AG04449 (cell line): ENCODE measurements at regions of chr17 and their contacts with region 1.

Region 1: DNA sequence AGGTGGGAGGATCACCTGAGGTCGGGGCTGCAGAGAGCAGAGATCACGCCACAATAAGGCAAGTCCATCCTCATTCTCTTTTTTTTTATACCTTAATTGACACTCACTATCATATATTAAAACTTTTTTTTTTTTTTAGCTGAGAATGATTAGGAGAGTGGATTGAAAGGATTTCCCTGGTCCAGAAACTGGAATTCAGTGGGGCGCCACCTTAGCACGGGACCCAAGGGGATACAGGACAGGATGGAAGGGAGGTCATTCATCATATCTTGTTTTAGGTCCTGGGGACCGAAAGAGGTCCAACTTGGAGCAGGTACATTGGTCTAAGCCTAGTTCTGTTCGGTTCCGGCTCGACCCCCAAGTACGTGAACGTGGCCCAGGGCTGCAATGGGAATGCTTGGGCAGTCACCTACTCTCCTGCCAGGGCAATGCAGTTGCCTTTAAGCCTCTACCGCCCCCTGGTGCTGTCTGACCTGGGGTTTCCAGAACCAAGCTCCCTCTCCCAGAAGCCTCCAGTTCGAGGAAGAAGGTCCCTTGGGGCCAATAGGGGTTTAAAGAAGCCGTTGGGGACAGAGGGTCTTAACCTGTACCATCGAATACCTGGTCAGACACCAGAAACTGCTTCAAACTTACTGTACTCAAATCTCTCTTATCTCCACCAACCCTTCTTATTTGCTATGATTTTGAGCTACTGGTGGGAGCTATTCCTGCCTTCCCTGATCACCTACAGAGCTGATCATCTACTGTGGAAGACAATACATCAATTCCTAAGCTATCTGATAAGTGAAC is 19.9 kb upstream of the GPATCH8 start:
- DNase-seq: no peak
- H3K4me3 ChIP-seq: no peak overlapping the region
- CTCF ChIP-seq: peak; percentile 75

Region 2: GRCh38 chr17:44324571-44325275 is 198.4 kb before region 1 on chr17 and contains the start of gene SLC25A39:
- CTCF ChIA-PET with region 1: interaction called, 13 read pairs
- POLR2A ChIA-PET with region 1: no interaction called
- DNase-seq: no peak
- H3K4me3 ChIP-seq: peak within 1 kb of the TSS; percentile 85
- CTCF ChIP-seq: no peak

Region 3: GRCh38 chr17:44350733-44351226 is 172.3 kb before region 1 on chr17:
- CTCF ChIA-PET with region 1: interaction called, 21 read pairs
- POLR2A ChIA-PET with region 1: no interaction called
- DNase-seq: no peak
- H3K4me3 ChIP-seq: no peak overlapping the region
- CTCF ChIP-seq: peak; percentile 87

Region 4: DNA sequence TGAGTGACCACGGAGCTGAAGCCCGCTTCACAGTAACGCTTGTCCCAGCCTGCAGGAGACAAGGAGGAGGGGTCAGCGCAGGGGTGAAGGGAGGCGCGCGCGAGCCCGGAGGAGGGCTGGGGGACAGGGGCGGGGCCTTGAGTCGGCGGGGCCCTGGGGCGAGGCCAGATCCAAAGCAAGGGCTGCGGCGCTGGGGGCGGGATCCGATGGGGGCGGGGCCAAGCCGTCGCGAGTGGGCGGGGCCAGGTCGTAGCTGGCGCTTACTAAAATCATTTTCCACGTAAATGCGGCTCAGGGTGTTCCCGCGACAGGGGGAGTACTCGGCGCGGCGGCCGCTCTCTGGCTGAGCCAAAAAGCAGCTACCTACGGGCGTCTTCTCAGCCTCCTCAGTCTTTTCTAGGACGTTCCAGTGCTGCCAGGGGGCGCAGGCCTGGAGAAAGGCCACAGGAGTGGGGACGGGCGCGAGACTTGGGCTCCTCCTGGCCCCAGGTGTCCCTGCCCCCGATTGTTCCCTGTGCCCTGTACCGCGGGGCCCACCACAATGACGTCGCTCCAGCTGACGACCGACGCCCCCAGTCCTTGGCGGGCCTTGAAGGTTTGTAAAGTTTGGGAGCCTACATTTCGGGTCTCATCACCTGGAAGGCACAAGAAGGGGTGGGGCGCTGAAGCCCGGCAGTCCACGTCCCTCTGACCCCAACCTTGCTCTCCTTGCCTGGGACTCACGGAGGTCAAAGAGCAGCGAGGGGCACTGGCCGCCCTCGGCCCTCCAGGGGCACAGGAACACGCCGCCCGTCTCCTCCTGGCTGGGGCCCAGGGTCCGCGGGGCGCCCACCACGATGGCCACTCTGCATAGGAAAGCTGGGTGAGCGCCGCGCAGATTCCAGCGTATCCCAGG is 137.5 kb before region 1 on chr17:
- CTCF ChIA-PET with region 1: interaction called, 10 read pairs
- POLR2A ChIA-PET with region 1: no interaction called
- DNase-seq: no peak
- H3K4me3 ChIP-seq: peak overlapping the region; percentile 62
- CTCF ChIP-seq: no peak

Region 5: GRCh38 chr17:44496815-44497214 is 26.3 kb before region 1 on chr17:
- CTCF ChIA-PET with region 1: interaction called, 12 read pairs
- POLR2A ChIA-PET with region 1: no interaction called
- DNase-seq: no peak
- H3K4me3 ChIP-seq: no peak overlapping the region
- CTCF ChIP-seq: no peak

Region 6: GRCh38 chr17:44533533-44534246 is 10.6 kb after region 1 on chr17:
- CTCF ChIA-PET with region 1: interaction called, 70 read pairs
- POLR2A ChIA-PET with region 1: no interaction called
- DNase-seq: no peak
- H3K4me3 ChIP-seq: peak overlapping the region; percentile 48
- CTCF ChIP-seq: peak; percentile 97